GM12878 (cell line): ENCODE measurements at regions of chr2 and their contacts with region 1.

Region 1: DNA sequence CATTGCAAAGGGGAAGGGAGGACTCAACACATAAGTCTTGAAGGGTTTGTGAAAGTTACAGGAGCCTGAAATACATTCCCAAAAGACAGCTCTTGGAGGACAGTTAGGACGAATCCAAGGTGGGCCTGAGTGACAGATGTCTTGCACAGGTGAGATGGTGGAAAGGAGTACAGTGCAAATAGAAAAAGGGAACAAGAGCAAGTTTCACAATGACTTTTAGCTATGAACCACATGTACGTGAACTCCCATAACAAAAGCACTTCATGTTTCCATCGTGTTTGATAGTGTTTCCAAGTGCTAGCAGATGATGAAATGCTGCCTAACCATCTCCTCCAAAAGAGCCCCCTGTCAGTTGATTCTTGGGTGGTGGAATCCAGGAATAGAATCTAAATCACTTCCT is 1.8 kb downstream of the IL18RAP start:
- DNase-seq: peak; percentile 61
- ATAC-seq: peak; percentile 91
- H3K4me3 ChIP-seq: no peak overlapping the region
- H3K27ac ChIP-seq: peak overlapping the region; percentile 62; the same call in 1 of the 2 replicates
- H3K4me1 ChIP-seq: peaks cover 32% of the 10 kb centered on the region
- H3K27me3 ChIP-seq: no peaks in the 10 kb centered on the region
- CTCF ChIP-seq: no peak
- EP300 ChIP-seq: peak in 1 of 2 experiments; percentile 75; a peak in 1 of 4 replicates
- POLR2A ChIP-seq: no peak
- RAD21 ChIP-seq: no peak

Region 2: GRCh38 chr2:101717071-101717845 is 707.5 kb before region 1 on chr2:
- CTCF ChIA-PET with region 1: no interaction called
- POLR2A ChIA-PET with region 1: no interaction called
- RAD21 ChIA-PET with region 1: no interaction called
- SMC1A ChIA-PET with region 1: no interaction called
- in situ Hi-C with region 1: no loop called
- intact Hi-C with region 1: no loop called
- DNase-seq: peak; percentile 44
- ATAC-seq: peak; percentile 84
- H3K4me3 ChIP-seq: 0 out of 2 replicates have a peak overlapping the region, but pooled peaks have one; percentile 10
- H3K27ac ChIP-seq: no peak overlapping the region; the same call in 1 of the 2 replicates
- H3K4me1 ChIP-seq: peaks cover 21% of the 10 kb centered on the region
- H3K27me3 ChIP-seq: no peaks in the 10 kb centered on the region; a peak in 1 of 4 replicates
- CTCF ChIP-seq: no peak
- EP300 ChIP-seq: no peak
- POLR2A ChIP-seq: no peak
- RAD21 ChIP-seq: no peak

Region 3: DNA sequence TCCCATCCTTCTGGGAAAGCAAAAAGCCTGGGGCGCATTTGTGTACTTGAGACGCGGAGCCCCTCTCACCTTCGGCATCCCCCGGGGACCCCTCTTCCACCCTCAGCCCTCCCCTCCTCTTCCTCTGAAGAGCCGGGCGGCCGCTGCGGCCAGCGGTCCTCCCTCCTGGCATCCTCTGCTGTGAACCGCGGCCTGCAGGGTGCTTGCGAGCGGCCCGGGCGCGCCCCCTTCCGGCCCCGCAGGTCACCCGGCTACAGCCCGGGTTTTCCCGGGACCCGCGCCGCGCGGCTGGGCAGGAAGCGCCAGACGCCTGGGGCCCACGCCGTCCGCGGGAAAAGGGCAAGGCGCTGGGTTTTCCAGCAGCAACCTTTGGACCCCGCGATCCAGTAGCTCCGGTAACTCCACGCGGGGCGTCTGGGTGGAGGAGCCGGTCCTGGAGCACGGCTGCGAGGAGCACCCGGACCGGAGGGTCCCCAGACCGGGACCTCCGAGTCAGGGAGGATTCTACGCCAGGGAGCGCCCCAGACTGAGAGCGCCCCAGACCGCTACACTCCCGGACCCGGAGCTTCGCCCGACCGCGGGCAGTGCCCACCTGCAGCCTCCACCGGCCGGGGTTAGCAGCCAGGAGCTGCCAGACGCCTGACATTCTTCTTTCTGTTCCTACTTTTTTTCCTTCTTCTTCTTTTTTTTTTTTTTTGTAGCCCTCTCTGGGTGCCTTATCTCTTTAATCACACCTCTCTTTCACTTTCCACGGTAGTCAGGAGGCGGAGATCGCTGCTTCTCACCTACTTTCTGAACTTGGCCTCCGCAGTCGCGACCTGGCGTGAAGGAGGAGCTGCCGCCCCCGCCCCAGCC is 69.0 kb before region 1 on chr2 and contains the start of gene IL18R1:
- CTCF ChIA-PET with region 1: interaction called, 6 read pairs
- POLR2A ChIA-PET with region 1: no interaction called
- RAD21 ChIA-PET with region 1: interaction called, 12 read pairs
- SMC1A ChIA-PET with region 1: interaction called, 3 read pairs
- in situ Hi-C with region 1: no loop called
- intact Hi-C with region 1: no loop called
- DNase-seq: peak; percentile 42
- ATAC-seq: peak; percentile 88
- H3K4me3 ChIP-seq: peak within 1 kb of the TSS; percentile 96
- H3K27ac ChIP-seq: peak within 1 kb of the TSS; percentile 91
- H3K4me1 ChIP-seq: peaks cover 4% of the 10 kb centered on the region
- H3K27me3 ChIP-seq: no peaks in the 10 kb centered on the region
- CTCF ChIP-seq: peak; percentile 72 to 91 (median 82)
- EP300 ChIP-seq: no peak
- POLR2A ChIP-seq: no peak
- RAD21 ChIP-seq: peak; percentile 76
- polyA plus RNA-seq, gene IL18R1: 3.5 to 3.8 TPM

Region 4: DNA sequence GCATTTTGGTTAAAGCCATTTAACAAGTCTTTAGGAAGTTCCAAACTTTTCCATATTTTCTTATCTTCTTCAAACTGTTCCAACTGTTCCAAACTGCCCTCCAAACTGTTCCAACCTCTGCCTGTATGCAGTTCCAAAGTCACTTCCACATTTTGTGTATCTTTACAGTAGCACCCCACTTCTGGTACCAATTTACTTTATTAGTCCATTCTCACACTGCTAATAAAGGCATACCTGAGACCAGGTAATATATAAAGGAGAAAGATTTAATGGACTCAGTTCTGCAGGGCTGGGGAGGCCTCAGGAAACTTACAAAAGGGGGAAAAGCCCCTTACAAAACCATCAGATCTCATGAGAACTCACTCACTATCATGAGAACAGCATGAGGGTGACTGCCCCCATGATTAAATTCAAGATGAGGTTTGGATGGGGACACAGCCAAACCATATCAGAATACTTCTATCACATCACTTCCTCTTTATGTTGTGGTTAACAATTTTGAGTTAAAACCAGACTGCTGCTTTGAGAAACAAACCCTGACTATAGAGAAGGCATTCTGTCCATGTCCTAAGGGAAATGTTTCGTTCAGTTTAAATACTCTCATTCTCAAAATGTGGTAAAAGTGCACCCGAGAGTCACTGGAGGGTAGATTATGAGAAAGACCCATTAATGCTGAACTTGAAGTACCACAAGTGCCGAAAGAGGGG is 58.2 kb before region 1 on chr2:
- CTCF ChIA-PET with region 1: interaction called, 3 read pairs
- POLR2A ChIA-PET with region 1: no interaction called
- RAD21 ChIA-PET with region 1: interaction called, 8 read pairs
- SMC1A ChIA-PET with region 1: no interaction called
- in situ Hi-C with region 1: loop called (anchors 5 kb)
- intact Hi-C with region 1: loop called (anchors 2 kb)
- DNase-seq: peak; percentile 91
- ATAC-seq: peak; percentile 79
- H3K4me3 ChIP-seq: no peak overlapping the region
- H3K27ac ChIP-seq: peak overlapping the region; percentile 93
- H3K4me1 ChIP-seq: peaks cover 23% of the 10 kb centered on the region
- H3K27me3 ChIP-seq: no peaks in the 10 kb centered on the region
- CTCF ChIP-seq: no peak
- EP300 ChIP-seq: peak in 1 of 2 experiments; percentile 45; a peak in 2 of 4 replicates
- POLR2A ChIP-seq: no peak
- RAD21 ChIP-seq: peak; percentile 8; the same call in 1 of the 2 replicates

Region 5: DNA sequence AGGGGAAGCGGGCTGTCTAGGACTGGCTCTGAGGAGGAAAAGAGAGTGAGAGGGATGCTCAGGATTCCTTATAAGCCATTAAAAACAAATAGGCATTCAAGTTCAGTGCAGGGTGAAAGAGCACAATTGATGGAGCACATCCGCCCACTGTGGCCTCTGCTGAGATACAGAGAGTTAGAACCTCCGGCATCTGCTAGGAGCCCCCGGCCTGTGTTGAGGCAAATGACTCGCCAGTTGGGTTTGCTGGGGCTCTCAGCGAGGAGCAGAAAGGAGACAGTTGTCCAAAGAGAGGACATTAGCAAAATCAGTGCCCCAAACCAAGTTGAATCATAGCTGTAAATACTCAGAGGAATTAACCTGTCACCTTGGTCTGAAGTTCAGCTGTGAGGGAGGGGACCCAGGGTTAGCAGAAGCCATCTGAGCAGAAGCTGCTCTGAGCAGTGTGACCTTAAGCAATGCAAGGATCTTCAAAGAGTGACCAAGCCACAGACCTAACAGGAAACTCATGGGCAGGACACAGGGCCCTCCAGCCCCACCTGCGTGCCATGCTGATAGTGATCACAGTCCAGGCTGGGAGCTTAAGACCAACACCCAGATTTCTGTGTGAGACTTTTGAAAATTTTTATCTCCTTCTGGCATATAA is 25.1 kb before region 1 on chr2:
- CTCF ChIA-PET with region 1: no interaction called
- POLR2A ChIA-PET with region 1: no interaction called
- RAD21 ChIA-PET with region 1: no interaction called
- SMC1A ChIA-PET with region 1: interaction called, 4 read pairs
- in situ Hi-C with region 1: no loop called
- intact Hi-C with region 1: loop called (anchors 2 kb)
- DNase-seq: no peak
- ATAC-seq: peak; percentile 37
- H3K4me3 ChIP-seq: no peak overlapping the region
- H3K27ac ChIP-seq: no peak overlapping the region
- H3K4me1 ChIP-seq: no peaks in the 10 kb centered on the region
- H3K27me3 ChIP-seq: no peaks in the 10 kb centered on the region
- CTCF ChIP-seq: no peak
- EP300 ChIP-seq: no peak
- POLR2A ChIP-seq: no peak
- RAD21 ChIP-seq: no peak

Region 6: DNA sequence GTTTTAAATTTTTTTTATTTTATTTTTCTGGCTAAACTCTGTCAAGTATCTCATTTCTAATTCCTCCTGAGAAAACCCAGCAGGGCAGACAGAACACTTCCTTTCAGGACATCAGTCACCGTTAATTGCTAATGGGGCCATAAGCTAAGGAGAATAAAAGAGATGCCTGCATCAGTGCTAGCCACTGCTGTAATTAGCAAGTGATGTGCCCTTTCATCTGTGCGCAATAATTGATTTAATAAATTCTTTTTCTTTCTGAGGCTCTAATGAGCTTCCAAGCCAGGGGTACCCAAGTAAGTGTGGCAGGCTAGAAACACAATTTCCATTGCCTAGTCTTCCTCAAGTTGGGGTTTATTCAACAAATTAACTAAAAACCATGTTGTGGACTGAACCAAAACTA is 113.7 kb after region 1 on chr2:
- CTCF ChIA-PET with region 1: no interaction called
- POLR2A ChIA-PET with region 1: no interaction called
- RAD21 ChIA-PET with region 1: no interaction called
- SMC1A ChIA-PET with region 1: no interaction called
- in situ Hi-C with region 1: no loop called
- intact Hi-C with region 1: no loop called
- DNase-seq: no peak
- ATAC-seq: no peak
- H3K4me3 ChIP-seq: no peak overlapping the region
- H3K27ac ChIP-seq: no peak overlapping the region
- H3K4me1 ChIP-seq: no peaks in the 10 kb centered on the region
- H3K27me3 ChIP-seq: no peaks in the 10 kb centered on the region
- CTCF ChIP-seq: no peak
- EP300 ChIP-seq: no peak
- POLR2A ChIP-seq: no peak
- RAD21 ChIP-seq: no peak